Ascending aorta (tissue), 2 donors: ENCODE measurements at regions of chr11 and their contacts with region 1.

Region 1: GRCh38 chr11:65083834-65084597 is at the starts of genes CDCA5 and ZFPL1:
- DNase-seq: peak; percentile 77 to 97
- H3K4me3 ChIP-seq: peak within 1 kb of the TSS; percentile 85 to 90
- H3K27ac ChIP-seq: peak within 1 kb of the TSS; percentile 93 to 97
- H3K4me1 ChIP-seq: peaks cover 10% of the 10 kb centered on the region in 2 donors
- H3K27me3 ChIP-seq: no peaks in the 10 kb centered on the region
- CTCF ChIP-seq: no peak
- total RNA-seq, gene CDCA5: not detected
- total RNA-seq, gene ZFPL1: 93.6 TPM

Region 2: GRCh38 chr11:64803163-64803845 is 280.7 kb before region 1 on chr11 and contains the start of gene MAP4K2:
- intact Hi-C with region 1: loop called (anchors 10 kb)
- DNase-seq: peak; percentile 51 to 95
- H3K4me3 ChIP-seq: peak within 1 kb of the TSS; percentile 65 to 80
- H3K27ac ChIP-seq: peak within 1 kb of the TSS; percentile 91 to 94
- H3K4me1 ChIP-seq: peaks cover 8 to 18% of the 10 kb centered on the region in 2 donors
- H3K27me3 ChIP-seq: no peaks in the 10 kb centered on the region
- CTCF ChIP-seq: peak in 1 of 3 experiments; percentile 15
- total RNA-seq, gene MAP4K2: 34.0 TPM

Region 3: GRCh38 chr11:64916775-64917662 is 167.0 kb before region 1 on chr11 and contains the start of gene ATG2A:
- intact Hi-C with region 1: loop called (anchors 1 kb)
- DNase-seq: peak; percentile 99 to 100
- H3K4me3 ChIP-seq: peak within 1 kb of the TSS; percentile 92 to 94
- H3K27ac ChIP-seq: peak within 1 kb of the TSS; percentile 75 to 76
- H3K4me1 ChIP-seq: peaks cover 6 to 19% of the 10 kb centered on the region in 2 donors
- H3K27me3 ChIP-seq: no peaks in the 10 kb centered on the region
- CTCF ChIP-seq: no peak
- total RNA-seq, gene ATG2A: 39.5 TPM

Region 4: DNA sequence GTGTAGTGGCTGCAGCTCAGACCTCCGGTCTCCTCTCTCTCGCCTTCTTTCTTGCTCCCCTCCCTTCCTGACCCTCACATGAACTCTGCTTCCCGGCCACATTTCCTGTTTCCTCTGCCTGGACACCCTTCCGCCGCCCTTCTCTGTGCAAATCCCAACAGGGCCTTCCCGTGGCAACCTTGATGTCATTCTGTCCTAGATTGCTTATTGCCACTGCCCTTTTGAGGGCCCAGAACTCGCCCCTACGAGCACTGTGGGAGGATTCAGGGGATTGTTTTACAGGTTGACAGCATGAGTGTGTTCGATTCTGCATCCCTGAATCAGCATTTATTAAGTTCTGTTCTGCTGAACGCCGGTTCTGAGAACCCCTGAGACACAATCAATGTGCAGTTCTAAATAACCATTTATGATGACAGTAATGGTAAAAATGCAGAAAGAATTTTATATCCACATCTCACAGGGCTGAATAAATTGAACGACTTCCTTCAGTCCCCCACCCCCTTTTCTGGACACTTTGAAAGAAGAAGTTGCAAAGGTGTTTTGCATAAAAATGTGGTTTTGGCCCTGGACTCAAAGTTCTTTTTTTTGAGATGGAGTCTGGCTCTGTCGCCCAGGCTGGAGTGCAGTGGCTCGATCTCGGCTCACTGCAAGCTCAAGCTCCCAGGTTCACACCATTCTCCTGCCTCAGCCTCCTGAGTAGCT is 93.6 kb before region 1 on chr11:
- intact Hi-C with region 1: no loop called
- DNase-seq: no peak
- H3K4me3 ChIP-seq: no peak overlapping the region
- H3K27ac ChIP-seq: no peak overlapping the region
- H3K4me1 ChIP-seq: no peaks in the 10 kb centered on the region
- H3K27me3 ChIP-seq: no peaks in the 10 kb centered on the region
- CTCF ChIP-seq: no peak

Region 5: DNA sequence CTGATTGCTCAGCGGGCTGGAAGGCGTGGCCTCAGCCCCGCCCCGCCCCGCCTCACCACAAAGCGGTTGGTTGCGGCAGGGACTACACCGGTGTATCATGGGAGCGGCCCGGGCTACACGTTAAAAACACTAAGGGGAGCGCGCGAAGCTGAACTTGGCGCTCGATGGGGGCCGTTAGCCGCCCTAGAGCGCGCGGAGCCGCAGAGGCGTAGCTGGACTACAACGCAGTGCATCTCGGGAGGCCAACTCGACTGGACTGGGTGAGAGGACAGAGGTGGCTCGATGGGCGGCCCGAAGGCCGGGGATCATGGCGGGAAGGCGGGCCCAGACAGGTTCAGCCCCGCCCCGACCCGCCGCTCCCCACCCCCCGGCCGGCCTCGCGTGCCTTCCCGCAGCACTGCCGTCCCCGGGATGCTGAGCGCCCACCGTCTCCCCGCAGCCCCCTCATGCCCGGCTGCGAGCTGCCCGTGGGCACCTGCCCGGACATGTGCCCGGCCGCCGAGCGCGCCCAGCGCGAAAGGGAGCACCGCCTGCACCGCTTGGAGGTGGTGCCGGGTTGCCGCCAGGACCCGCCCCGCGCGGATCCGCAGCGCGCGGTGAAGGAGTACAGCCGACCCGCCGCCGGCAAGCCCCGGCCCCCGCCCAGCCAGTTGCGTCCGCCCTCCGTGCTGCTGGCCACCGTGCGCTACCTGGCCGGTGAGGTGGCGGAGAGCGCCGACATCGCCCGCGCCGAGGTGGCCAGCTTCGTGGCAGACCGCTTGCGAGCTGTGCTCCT is 43.0 kb before region 1 on chr11 and contains the start of gene SAC3D1:
- intact Hi-C with region 1: loop called (anchors 5 kb)
- DNase-seq: peak; percentile 62 to 94
- H3K4me3 ChIP-seq: peak within 1 kb of the TSS; percentile 82 to 95
- H3K27ac ChIP-seq: peak within 1 kb of the TSS; percentile 89
- H3K4me1 ChIP-seq: peaks cover 4 to 6% of the 10 kb centered on the region in 2 donors
- H3K27me3 ChIP-seq: no peaks in the 10 kb centered on the region
- CTCF ChIP-seq: no peak
- total RNA-seq, gene SAC3D1: 19.6 TPM

Region 6: DNA sequence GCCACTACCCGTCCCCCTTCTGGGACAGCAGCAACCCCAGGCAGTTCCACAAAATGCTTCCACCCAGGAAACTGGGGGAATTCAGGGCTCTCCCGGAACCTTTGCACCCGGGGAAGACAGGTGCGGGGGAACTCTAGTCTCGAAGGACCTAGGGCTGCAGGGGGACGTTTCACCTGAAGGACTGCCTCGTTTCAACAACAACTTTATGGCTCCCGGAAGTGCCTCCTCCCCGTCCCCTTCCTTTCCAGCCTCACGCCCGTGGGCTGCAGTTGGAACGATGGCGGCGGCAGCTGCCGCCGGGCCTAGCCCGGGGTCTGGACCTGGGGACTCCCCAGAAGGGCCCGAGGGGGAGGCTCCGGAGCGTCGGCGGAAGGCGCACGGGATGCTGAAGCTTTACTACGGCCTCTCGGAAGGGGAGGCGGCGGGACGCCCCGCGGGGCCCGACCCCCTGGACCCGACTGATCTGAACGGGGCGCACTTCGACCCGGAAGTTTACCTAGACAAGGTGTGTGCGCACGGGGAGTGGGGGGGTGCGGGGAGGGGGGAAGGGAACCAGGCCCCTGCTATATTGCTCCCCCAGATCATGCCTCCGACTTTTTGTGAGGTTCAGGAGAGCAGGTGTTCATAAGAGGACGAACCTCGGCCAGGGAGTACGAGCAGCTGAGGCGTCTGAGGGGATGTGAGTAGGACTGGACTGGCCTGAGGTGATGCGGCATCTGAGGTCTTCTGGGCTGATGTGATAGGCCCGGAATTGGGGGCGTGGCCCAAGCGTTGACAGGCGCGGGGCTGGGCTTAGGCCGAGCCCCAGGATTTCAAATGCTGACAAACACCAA is 12.2 kb after region 1 on chr11 and contains the start of gene VPS51:
- intact Hi-C with region 1: loop called (anchors 1 kb)
- DNase-seq: peak; percentile 66 to 94
- H3K4me3 ChIP-seq: peak within 1 kb of the TSS; percentile 73 to 80
- H3K27ac ChIP-seq: peak within 1 kb of the TSS; percentile 86 to 95
- H3K4me1 ChIP-seq: peaks cover 3 to 15% of the 10 kb centered on the region in 2 donors
- H3K27me3 ChIP-seq: no peaks in the 10 kb centered on the region
- CTCF ChIP-seq: peak in 1 of 3 experiments; percentile 20
- total RNA-seq, gene VPS51: 226 TPM

Region 7: GRCh38 chr11:65117216-65118096 is 33.4 kb after region 1 on chr11 and contains the start of gene ZNHIT2:
- intact Hi-C with region 1: loop called (anchors 1 kb)
- DNase-seq: peak; percentile 96 to 100
- H3K4me3 ChIP-seq: peak within 1 kb of the TSS; percentile 87 to 97
- H3K27ac ChIP-seq: peak within 1 kb of the TSS; percentile 71 to 93
- H3K4me1 ChIP-seq: peaks cover 27 to 33% of the 10 kb centered on the region in 2 donors
- H3K27me3 ChIP-seq: no peaks in the 10 kb centered on the region
- CTCF ChIP-seq: peak; percentile 92 to 97 (median 93)
- total RNA-seq, gene ZNHIT2: 35.3 TPM

Region 8: GRCh38 chr11:65169164-65169641 is 85.2 kb after region 1 on chr11:
- intact Hi-C with region 1: no loop called
- DNase-seq: no peak
- H3K4me3 ChIP-seq: no peak overlapping the region
- H3K27ac ChIP-seq: no peak overlapping the region
- H3K4me1 ChIP-seq: peaks cover 0 to 3% of the 10 kb centered on the region in 2 donors
- H3K27me3 ChIP-seq: no peaks in the 10 kb centered on the region
- CTCF ChIP-seq: no peak